ENCODE measurements at regions of chr7 and their contacts with region 1.

Region 1: DNA sequence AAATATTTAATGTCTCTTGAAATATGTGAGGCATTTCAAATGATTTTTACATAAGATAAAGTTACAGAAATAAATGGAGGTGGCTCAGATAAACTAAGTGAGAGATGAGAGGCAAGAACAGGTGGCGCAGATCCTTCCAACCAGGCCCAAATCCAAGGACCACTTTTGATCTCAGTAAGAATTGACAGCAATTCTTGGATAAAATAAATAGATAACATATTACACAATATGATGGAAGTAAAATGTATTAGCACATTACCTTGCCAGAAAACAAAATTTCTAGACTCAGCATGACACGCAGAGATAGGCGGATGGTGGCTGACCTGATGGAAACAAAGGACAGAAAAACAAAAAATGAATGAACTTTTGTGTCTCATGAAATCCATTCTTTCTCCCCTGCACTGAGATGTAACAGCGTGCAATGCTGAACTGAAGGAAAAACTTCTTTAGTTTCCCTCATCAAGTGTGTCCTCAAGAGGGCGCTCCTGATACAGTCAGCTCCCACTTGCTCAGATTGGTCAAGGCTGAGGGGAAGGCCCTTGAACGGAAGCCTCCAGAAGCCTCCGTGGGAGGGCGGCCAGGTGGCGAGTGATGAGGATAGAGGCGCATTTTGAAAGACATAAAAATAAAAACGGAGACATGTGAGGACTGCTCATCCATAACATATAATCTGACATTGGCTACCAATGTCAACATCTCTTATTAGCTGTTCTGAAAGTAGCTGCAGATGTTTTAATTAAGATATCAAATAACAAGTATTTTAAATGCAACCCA is 62.8 kb upstream of the GSDME start:
- DNase-seq: peak; percentile 77 to 80
- ATAC-seq: peak; percentile 90 to 93
- H3K4me3 ChIP-seq: no peak overlapping the region
- H3K27ac ChIP-seq: peak overlapping the region in 3 of 4 donors; percentile 22 to 53 (median 49)
- H3K4me1 ChIP-seq: peaks cover 10 to 11% of the 10 kb centered on the region in 2 donors
- H3K27me3 ChIP-seq: no peaks in the 10 kb centered on the region
- CTCF ChIP-seq: peak; percentile 60 to 87 (median 81)
- POLR2A ChIP-seq: no peak

Region 2: GRCh38 chr7:24882989-24883621 is 63.0 kb after region 1 on chr7:
- in situ Hi-C with region 1: no loop called
- intact Hi-C with region 1: loop called (anchors 10 kb)
- DNase-seq: peak; percentile 76
- ATAC-seq: peak; percentile 83 to 94
- H3K4me3 ChIP-seq: no peak overlapping the region
- H3K27ac ChIP-seq: peak overlapping the region; percentile 48 to 73 (median 53)
- H3K4me1 ChIP-seq: peaks cover 34 to 40% of the 10 kb centered on the region in 2 donors
- H3K27me3 ChIP-seq: no peaks in the 10 kb centered on the region
- CTCF ChIP-seq: no peak
- POLR2A ChIP-seq: no peak

Region 3: GRCh38 chr7:24979863-24980533 is 159.9 kb after region 1 on chr7 and contains the start of gene OSBPL3:
- in situ Hi-C with region 1: loop called in 3 of 4 experiments (anchors 5 to 10 kb)
- intact Hi-C with region 1: loop called (anchors 2 kb)
- DNase-seq: peak; percentile 90 to 91
- ATAC-seq: peak; percentile 92 to 93
- H3K4me3 ChIP-seq: peak within 1 kb of the TSS; percentile 70 to 94 (median 83)
- H3K27ac ChIP-seq: peak within 1 kb of the TSS; percentile 77 to 86 (median 83)
- H3K4me1 ChIP-seq: peaks cover 0 to 9% of the 10 kb centered on the region in 2 donors
- H3K27me3 ChIP-seq: no peaks in the 10 kb centered on the region
- CTCF ChIP-seq: no peak
- POLR2A ChIP-seq: peak; percentile 66 to 86
- total RNA-seq, gene OSBPL3: 3.1 to 7.0 (median 5.3) TPM

Region 4: GRCh38 chr7:25069900-25070443 is 249.9 kb after region 1 on chr7:
- in situ Hi-C with region 1: loop called (anchors 5 kb)
- intact Hi-C with region 1: loop called (anchors 1 kb)
- DNase-seq: peak; percentile 14 to 24
- ATAC-seq: peak; percentile 83 to 88
- H3K4me3 ChIP-seq: peak overlapping the region; percentile 29 to 47 (median 36)
- H3K27ac ChIP-seq: no peak overlapping the region
- H3K4me1 ChIP-seq: peaks cover 0 to 3% of the 10 kb centered on the region in 2 donors
- H3K27me3 ChIP-seq: no peaks in the 10 kb centered on the region
- CTCF ChIP-seq: peak; percentile 70 to 88 (median 74)
- POLR2A ChIP-seq: no peak

Region 5: GRCh38 chr7:25075459-25075858 is 255.4 kb after region 1 on chr7:
- in situ Hi-C with region 1: loop called in 2 of 4 experiments (anchors 5 kb)
- intact Hi-C with region 1: loop called (anchors 1 kb)
- DNase-seq: no peak
- ATAC-seq: no peak
- H3K4me3 ChIP-seq: no peak overlapping the region
- H3K27ac ChIP-seq: no peak overlapping the region
- H3K4me1 ChIP-seq: no peaks in the 10 kb centered on the region
- H3K27me3 ChIP-seq: no peaks in the 10 kb centered on the region
- CTCF ChIP-seq: no peak
- POLR2A ChIP-seq: no peak

Region 6: DNA sequence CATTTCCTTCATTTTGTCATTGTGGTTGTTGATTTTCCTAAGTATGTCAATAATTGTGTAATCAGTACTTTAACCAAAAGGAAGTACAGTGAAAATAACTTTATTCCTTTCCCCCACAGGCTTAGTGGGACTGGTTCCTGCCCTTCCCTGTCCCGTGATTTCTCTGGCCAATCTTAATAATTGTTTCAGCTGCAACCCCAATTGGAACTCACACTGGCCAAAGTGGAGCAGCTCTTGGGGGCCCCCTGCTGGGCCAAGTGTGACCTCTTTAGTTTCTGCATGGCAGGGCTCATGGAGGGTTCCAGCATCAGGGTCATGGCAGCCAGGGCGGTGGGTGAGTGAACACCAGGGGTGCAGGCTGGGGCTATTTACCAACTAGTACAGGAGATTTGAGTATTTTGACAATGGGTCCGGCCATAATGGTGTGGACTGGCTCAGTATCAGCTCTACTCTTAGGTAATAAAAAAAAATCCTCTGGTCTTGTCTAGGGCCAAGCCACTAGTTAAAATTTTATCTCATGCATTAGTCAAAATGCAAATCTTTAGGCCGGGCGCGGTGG is 273.2 kb after region 1 on chr7:
- in situ Hi-C with region 1: no loop called
- intact Hi-C with region 1: loop called (anchors 2 kb)
- DNase-seq: peak in 1 of 2 donors; percentile 27
- ATAC-seq: peak in 1 of 2 donors; percentile 47
- H3K4me3 ChIP-seq: no peak overlapping the region
- H3K27ac ChIP-seq: no peak overlapping the region
- H3K4me1 ChIP-seq: peaks cover 0 to 4% of the 10 kb centered on the region in 2 donors
- H3K27me3 ChIP-seq: no peaks in the 10 kb centered on the region
- CTCF ChIP-seq: peak in 4 of 5 experiments; percentile 31 to 63 (median 42)
- POLR2A ChIP-seq: no peak